ENCODE measurements at regions of chr3 and their contacts with region 1.

Region 1: DNA sequence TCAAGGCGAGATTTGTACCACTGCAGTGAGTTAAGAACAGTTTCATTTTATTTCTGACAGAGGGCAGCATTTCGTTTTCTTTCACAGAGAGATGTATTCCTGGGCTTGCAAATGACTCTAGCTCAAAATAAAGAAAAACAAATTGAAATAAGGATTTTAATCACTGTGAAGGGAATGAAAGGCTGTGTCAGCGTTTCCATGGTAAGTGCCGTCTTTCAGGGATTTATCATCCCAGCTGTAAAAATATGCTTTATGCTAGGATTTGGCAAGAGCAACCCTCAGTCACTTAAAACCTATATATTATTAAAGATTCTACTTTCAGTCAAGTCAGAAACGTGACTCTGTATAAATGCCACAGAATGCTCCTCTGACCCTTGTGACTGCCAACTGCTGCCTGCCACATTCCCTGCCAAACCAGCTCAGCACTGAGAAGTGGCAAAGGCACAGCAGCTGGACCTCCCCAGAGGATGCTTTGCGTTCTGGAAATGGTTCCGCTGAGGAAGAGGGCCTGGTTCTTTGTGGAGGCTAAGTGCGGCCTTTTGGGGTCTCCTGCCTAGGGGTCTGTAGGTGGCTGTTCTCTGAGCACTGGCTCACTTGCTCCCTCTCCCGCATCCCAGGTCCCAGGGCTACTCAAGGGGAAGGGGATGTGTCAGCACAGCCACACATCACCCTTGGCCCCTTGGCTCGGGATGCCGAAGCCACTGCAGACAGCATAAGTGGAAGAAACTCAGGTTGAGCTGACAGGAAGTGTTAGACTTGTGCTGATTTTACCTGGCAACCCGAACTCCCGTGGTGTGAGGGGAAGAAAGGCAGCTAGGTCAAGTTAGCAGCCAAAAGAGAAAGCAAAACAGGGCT is 56.6 kb upstream of the POMGNT2 start:
- H3K4me3 Mint-ChIP-seq: no peak overlapping the region
- H3K27ac Mint-ChIP-seq: no peak overlapping the region
- H3K4me1 Mint-ChIP-seq: no peaks in the 10 kb centered on the region
- H3K27me3 Mint-ChIP-seq: no peaks in the 10 kb centered on the region

Region 2: GRCh38 chr3:43503067-43503728 is 340.7 kb after region 1 on chr3:
- intact Hi-C with region 1: loop called (anchors 1 kb)
- H3K4me3 Mint-ChIP-seq: no peak overlapping the region
- H3K27ac Mint-ChIP-seq: no peak overlapping the region
- H3K4me1 Mint-ChIP-seq: peaks cover 16% of the 10 kb centered on the region
- H3K27me3 Mint-ChIP-seq: no peaks in the 10 kb centered on the region

Measured in dendritic cell treated with granulocyte-macrophage colony-stimulating factor and Interleukin-4, amounts not matched to agents 40 ng/mL and 50 ng/mL, for 4 days (primary cell).